ENCODE measurements at regions of chr15 and their contacts with region 1.

Region 1: DNA sequence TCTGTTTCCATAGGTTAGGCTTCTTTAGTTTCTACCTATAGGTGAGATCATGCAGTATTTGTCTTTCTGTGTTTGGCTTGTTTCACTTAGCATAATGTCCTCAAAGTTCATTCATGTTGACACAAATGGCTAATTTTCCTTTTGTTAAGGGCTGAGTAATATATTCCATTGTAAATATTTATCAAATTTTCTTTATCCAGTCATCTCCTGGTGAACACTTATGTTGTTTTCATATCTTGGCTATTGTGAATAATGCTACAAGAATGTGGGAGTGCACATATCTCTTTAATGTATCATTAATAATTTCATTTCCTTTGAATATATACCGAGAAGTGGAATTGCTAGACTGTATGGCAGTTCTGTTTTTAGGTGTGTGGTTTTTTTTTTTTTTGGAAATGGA is 251.0 kb upstream of the SEMA6D start:
- DNase-seq: peak; percentile 84
- H3K4me3 ChIP-seq: no peak overlapping the region
- H3K27ac ChIP-seq: peak overlapping the region; percentile 93
- H3K4me1 ChIP-seq: peaks cover 42% of the 10 kb centered on the region
- H3K27me3 ChIP-seq: no peaks in the 10 kb centered on the region
- CTCF ChIP-seq: no peak
- POLR2A ChIP-seq: no peak

Region 2: DNA sequence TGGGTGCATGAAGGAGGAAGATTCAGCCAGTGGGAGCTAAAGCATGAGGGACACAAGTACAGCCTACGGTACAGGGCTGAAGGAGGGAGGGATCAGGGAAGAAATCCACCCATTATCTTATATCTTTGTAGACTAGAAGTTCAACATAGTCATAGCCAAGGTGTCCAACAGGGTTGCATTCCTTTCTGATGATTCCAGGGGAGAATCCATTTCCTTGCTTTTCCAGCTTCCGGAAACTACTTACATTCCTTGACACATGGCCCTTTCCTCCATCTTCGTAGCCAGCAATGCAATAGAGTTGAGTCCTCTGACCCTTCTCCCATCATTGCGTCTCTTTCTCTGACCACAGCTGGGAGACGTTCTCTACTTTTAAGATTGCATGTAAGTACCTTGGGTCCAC is 220.0 kb before region 1 on chr15:
- CTCF ChIA-PET with region 1: no interaction called
- POLR2A ChIA-PET with region 1: no interaction called
- dilution Hi-C with region 1: no loop called
- intact Hi-C with region 1: loop called (anchors 1 kb)
- DNase-seq: peak; percentile 33
- H3K4me3 ChIP-seq: no peak overlapping the region
- H3K27ac ChIP-seq: peak overlapping the region; percentile 29
- H3K4me1 ChIP-seq: peaks cover 14% of the 10 kb centered on the region
- H3K27me3 ChIP-seq: no peaks in the 10 kb centered on the region
- CTCF ChIP-seq: no peak
- POLR2A ChIP-seq: no peak

Region 3: GRCh38 chr15:47415539-47415971 is 50.8 kb before region 1 on chr15:
- CTCF ChIA-PET with region 1: interaction called, 7 read pairs
- POLR2A ChIA-PET with region 1: no interaction called
- dilution Hi-C with region 1: no loop called
- intact Hi-C with region 1: loop called (anchors 1 kb)
- DNase-seq: peak; percentile 91
- H3K4me3 ChIP-seq: no peak overlapping the region
- H3K27ac ChIP-seq: peak overlapping the region; percentile 97
- H3K4me1 ChIP-seq: peaks cover 40% of the 10 kb centered on the region
- H3K27me3 ChIP-seq: no peaks in the 10 kb centered on the region
- CTCF ChIP-seq: no peak
- POLR2A ChIP-seq: no peak

Region 4: GRCh38 chr15:47422901-47423665 is 43.3 kb before region 1 on chr15:
- CTCF ChIA-PET with region 1: no interaction called
- POLR2A ChIA-PET with region 1: no interaction called
- dilution Hi-C with region 1: no loop called
- intact Hi-C with region 1: loop called (anchors 2 kb)
- DNase-seq: peak; percentile 76
- H3K4me3 ChIP-seq: no peak overlapping the region
- H3K27ac ChIP-seq: peak overlapping the region; percentile 84
- H3K4me1 ChIP-seq: peaks cover 34% of the 10 kb centered on the region
- H3K27me3 ChIP-seq: no peaks in the 10 kb centered on the region
- CTCF ChIP-seq: no peak
- POLR2A ChIP-seq: no peak

Region 5: DNA sequence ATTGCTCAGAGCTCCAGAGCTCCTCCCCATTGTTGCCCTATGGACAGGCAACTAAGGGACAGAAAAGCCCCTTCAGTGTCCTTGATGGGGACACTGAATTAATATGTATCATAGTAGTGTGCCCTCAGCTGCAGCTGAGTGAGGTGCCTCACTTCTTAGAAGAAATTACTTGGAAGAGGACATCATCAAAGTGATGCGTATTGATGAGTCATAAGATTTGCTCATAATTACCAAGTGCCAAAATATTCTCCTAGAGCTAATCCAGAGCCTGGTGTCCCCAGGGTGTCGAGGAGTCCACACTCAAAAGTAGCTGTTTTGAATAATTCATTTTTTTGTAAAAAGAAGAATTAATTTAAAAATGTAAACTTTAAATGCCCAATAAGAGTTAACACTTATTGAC is 50.2 kb after region 1 on chr15:
- CTCF ChIA-PET with region 1: interaction called, 9 read pairs
- POLR2A ChIA-PET with region 1: no interaction called
- dilution Hi-C with region 1: no loop called
- intact Hi-C with region 1: loop called (anchors 1 kb)
- DNase-seq: no peak
- H3K4me3 ChIP-seq: no peak overlapping the region
- H3K27ac ChIP-seq: peak overlapping the region; percentile 66
- H3K4me1 ChIP-seq: peaks cover 52% of the 10 kb centered on the region
- H3K27me3 ChIP-seq: peaks cover 0 to 3% of the 10 kb centered on the region in 2 experiments
- CTCF ChIP-seq: no peak
- POLR2A ChIP-seq: no peak

Region 6: GRCh38 chr15:48144889-48145288 is 678.5 kb after region 1 on chr15:
- CTCF ChIA-PET with region 1: no interaction called
- POLR2A ChIA-PET with region 1: no interaction called
- dilution Hi-C with region 1: no loop called
- intact Hi-C with region 1: loop called (anchors 1 kb)
- DNase-seq: no peak
- H3K4me3 ChIP-seq: no peak overlapping the region
- H3K27ac ChIP-seq: peak overlapping the region; percentile 18
- H3K4me1 ChIP-seq: peaks cover 28% of the 10 kb centered on the region
- H3K27me3 ChIP-seq: no peaks in the 10 kb centered on the region
- CTCF ChIP-seq: no peak
- POLR2A ChIP-seq: no peak